ENCODE measurements at regions of chr5 and their contacts with region 1.

Region 1: GRCh38 chr5:17080361-17080760 is 137.1 kb upstream of the BASP1 start:
- DNase-seq: no peak
- H3K27ac ChIP-seq: no peak overlapping the region
- CTCF ChIP-seq: no peak

Region 2: GRCh38 chr5:17067657-17068392 is 12.5 kb before region 1 on chr5:
- CTCF ChIA-PET with region 1: interaction called, 3 read pairs
- POLR2A ChIA-PET with region 1: interaction called, 10 read pairs
- DNase-seq: no peak
- H3K27ac ChIP-seq: no peak overlapping the region
- CTCF ChIP-seq: no peak

Measured in RWPE1 (cell line).